ENCODE measurements at regions of chr13 and their contacts with region 1.

Region 1: DNA sequence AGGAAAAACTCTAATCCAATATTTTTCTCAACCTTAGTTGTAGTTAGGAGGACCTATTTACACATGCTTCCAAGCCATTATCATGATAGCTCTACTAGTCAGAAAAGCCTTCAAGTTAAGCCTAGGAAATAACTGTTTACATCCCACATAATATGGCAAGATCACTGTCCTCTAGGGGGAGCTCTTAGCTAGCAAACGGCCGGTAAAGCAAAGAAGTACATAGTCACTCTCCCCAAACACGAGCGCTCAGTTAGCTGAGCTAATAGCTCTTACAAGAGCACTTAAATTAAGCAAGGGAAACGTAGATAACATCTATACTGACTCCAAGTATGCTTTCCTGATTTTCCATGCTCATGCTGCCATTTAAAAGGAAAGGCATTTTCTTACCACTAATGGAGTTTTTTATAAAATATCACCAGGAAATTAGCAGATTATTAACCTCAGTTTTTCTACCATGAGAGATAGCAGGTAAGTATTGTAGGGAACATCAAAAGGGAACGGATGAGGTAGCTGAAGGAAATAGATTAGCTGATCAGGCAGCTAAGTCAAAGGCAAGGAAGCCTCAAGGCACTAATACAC is 100.6 kb upstream of the PABPC3 start:
- DNase-seq: peak; percentile 60
- H3K4me3 ChIP-seq: no peak overlapping the region
- H3K27ac ChIP-seq: no peak overlapping the region
- H3K4me1 ChIP-seq: no peaks in the 10 kb centered on the region
- H3K27me3 ChIP-seq: no peaks in the 10 kb centered on the region
- CTCF ChIP-seq: peak; percentile 31 to 69 (median 58)
- POLR2A ChIP-seq: no peak

Region 2: GRCh38 chr13:25114220-25114619 is 118.9 kb after region 1 on chr13:
- intact Hi-C with region 1: loop called (anchors 10 kb)
- DNase-seq: peak; percentile 53
- H3K4me3 ChIP-seq: no peak overlapping the region
- H3K27ac ChIP-seq: no peak overlapping the region
- H3K4me1 ChIP-seq: no peaks in the 10 kb centered on the region
- H3K27me3 ChIP-seq: no peaks in the 10 kb centered on the region
- CTCF ChIP-seq: peak; percentile 28 to 60 (median 50)
- POLR2A ChIP-seq: no peak

Measured in prostate gland (tissue), 2 donors.